Activated T-helper 1 cell treated with anti-CD3 and anti-CD28 coated beads, Interleukin-12 subunit alpha, Interleukin-12 subunit beta, Interleukin-2, Interleukin-4 antibody, amounts not matched to agents 30 ng/mL and 10 ng/mL and 1 ng/mL, durations not matched to agents 14 hours and 24 hours and 36 hours (primary cell): ENCODE measurements at regions of chr2 and their contacts with region 1.

Region 1: DNA sequence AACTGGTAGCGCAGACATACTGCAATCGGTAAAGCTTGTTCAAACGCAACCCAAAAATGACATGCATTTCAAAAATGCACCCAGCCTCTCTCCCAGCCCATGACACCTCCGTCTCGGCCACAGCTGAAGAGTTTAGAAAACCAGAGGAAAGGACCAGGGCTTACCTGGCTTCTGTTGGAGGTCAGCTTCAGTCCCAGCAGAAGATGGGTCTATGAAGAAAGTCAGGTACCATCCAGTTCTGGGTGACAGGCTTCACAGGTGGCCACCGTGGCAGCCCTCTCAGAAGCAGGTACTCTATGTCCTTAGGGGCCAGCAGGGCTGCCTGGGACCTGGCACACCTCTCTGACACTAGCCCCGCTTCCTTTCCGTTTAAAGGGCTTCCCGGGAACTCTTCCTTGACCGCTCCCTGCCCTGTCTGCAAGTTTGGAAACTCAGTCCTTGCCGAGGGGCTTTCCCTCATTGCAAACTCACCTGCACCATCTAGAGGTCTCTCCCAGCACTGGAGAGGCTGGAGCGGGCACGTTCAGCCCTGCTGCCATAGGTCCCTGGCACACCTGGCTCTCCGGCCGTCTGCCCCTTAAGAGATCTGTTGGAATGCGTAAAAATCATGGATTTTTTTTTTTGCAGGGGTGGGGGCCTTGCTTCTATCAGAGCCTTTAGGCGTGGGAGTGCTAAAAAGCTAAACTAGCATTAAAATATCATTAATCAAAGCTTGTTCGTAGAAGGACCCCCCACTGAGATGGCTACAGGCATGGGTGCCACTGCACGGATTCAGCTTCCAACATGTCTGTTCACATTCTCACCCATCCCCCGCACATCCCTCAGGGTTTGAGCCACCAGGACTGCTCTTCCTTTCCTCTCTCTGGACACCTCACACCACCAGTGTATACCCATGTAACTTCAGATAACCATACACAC is at the start of gene EDAR:
- DNase-seq: no peak
- H3K4me3 Mint-ChIP-seq: peak within 1 kb of the TSS; percentile 72
- H3K27ac Mint-ChIP-seq: no peak within 1 kb of the TSS
- H3K4me1 Mint-ChIP-seq: peaks cover 31% of the 10 kb centered on the region
- H3K27me3 Mint-ChIP-seq: peaks cover 7% of the 10 kb centered on the region
- total RNA-seq, gene EDAR: 1.9 and 2.3 TPM in 2 replicates

Region 2: DNA sequence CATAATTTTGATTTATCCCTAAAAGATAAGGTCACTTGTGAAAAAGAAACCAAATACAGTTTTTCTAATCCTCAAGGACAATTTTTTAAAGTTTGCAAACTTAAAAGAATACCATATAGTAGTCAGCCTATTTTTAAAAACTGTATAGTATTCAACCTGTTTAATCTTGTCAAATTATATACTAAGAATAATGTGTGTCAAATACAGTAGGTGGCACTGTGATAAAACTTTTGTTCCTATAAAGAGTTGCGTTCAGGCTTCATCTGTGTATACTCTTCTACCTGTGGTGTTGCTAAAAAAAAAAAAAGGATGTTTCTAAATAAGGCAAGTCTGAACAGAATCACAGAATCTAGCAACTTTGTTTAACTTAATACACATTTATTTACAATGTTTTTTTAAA is 133.9 kb before region 1 on chr2:
- intact Hi-C with region 1: loop called (anchors 1 kb)
- DNase-seq: no peak
- H3K4me3 Mint-ChIP-seq: no peak overlapping the region
- H3K27ac Mint-ChIP-seq: no peak overlapping the region
- H3K4me1 Mint-ChIP-seq: peaks cover 7% of the 10 kb centered on the region
- H3K27me3 Mint-ChIP-seq: no peaks in the 10 kb centered on the region

Region 3: DNA sequence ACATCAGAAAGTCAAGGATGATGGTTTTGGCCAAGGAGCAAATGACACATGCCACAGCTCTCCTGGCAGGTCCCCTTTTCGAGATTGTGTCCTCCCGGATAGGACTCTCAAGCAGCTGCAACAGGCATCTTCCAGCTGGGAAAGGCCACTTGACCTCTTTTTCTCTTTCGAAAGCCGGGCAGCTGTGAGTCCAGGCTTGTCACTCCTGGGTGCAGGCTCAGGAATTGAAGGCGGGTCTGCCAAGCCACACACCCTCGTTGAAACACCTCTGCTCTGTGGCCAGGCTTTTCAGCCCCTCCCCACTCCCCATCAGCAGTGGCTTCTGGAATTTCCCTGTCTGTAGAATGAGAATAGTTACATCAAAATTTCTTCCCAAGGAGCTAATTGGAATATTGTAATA is 104.4 kb before region 1 on chr2:
- intact Hi-C with region 1: no loop called
- DNase-seq: no peak
- H3K4me3 Mint-ChIP-seq: no peak overlapping the region
- H3K27ac Mint-ChIP-seq: no peak overlapping the region
- H3K4me1 Mint-ChIP-seq: no peaks in the 10 kb centered on the region
- H3K27me3 Mint-ChIP-seq: peaks cover 5% of the 10 kb centered on the region

Region 4: DNA sequence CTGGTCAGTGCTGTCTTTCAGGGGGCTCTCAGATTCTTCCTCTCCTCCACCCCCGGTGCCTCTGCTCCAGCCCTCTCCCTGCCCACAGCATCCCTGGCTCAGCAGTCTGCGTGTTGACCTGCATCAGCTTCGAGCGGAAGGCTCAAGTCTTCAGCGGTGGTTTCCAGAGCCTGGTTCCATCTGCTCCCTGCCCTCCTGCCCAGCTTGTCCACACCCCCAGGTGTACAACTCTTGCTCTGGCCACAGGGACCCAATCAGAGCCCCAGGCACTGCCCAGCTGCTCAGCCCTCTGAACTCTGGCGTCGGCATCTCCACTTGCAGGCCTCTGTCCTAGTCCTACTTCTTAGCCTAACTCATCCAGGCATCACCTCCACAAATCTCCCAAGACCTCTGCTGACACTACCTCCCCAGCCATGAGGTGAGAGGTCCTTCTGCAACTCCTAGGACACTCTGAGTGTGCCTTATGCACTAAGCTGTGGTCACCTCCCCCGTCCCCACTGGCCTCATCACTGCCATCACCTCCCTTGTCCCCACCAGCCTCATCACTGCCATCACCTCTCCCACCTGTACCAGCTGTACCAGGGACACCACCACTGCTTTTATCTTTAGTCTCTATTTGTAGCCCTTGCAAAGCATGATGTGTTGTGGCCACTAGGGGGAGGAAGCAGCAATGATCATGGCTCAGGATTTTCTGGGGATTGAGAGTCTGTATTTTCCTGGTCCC is 61.0 kb before region 1 on chr2:
- intact Hi-C with region 1: loop called (anchors 1 kb)
- DNase-seq: no peak
- H3K4me3 Mint-ChIP-seq: no peak overlapping the region
- H3K27ac Mint-ChIP-seq: no peak overlapping the region
- H3K4me1 Mint-ChIP-seq: no peaks in the 10 kb centered on the region
- H3K27me3 Mint-ChIP-seq: no peaks in the 10 kb centered on the region

Region 5: DNA sequence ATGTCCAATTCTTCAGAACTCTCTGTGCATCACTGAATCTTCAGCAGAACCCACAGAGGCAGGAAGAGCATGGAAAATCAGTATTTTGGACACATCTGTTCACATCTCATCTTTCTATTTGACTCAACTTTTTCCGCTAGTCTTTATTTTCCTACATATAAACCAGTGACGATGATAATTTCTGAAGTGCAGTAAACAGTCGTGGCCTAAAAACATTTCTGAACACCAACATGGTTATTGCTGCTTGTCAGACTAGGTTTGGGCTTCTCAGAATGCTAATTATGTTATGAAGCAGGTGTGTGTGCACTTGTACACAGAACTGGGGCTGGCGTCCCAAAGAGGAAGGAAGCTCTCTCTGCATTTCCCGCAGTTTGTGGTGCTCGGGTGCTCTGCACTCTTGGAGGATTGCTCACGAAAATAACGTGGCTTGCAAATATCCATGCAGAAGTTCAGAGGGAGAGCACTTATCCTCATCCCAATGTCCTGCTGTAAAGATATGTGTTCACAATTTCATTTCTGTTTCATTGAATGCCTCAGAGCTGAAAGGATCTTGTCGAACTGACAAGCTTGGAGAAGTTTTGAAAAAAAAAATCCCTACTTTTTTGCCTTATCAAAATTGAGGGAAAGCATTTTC is 50.9 kb before region 1 on chr2:
- intact Hi-C with region 1: loop called (anchors 2 kb)
- DNase-seq: no peak
- H3K4me3 Mint-ChIP-seq: no peak overlapping the region
- H3K27ac Mint-ChIP-seq: peak overlapping the region; percentile 74
- H3K4me1 Mint-ChIP-seq: peaks cover 23% of the 10 kb centered on the region
- H3K27me3 Mint-ChIP-seq: peaks cover 2% of the 10 kb centered on the region

Region 6: GRCh38 chr2:109005686-109006204 is 16.7 kb after region 1 on chr2:
- intact Hi-C with region 1: no loop called
- DNase-seq: no peak
- H3K4me3 Mint-ChIP-seq: no peak overlapping the region
- H3K27ac Mint-ChIP-seq: no peak overlapping the region
- H3K4me1 Mint-ChIP-seq: no peaks in the 10 kb centered on the region
- H3K27me3 Mint-ChIP-seq: peaks cover 2% of the 10 kb centered on the region

Region 7: DNA sequence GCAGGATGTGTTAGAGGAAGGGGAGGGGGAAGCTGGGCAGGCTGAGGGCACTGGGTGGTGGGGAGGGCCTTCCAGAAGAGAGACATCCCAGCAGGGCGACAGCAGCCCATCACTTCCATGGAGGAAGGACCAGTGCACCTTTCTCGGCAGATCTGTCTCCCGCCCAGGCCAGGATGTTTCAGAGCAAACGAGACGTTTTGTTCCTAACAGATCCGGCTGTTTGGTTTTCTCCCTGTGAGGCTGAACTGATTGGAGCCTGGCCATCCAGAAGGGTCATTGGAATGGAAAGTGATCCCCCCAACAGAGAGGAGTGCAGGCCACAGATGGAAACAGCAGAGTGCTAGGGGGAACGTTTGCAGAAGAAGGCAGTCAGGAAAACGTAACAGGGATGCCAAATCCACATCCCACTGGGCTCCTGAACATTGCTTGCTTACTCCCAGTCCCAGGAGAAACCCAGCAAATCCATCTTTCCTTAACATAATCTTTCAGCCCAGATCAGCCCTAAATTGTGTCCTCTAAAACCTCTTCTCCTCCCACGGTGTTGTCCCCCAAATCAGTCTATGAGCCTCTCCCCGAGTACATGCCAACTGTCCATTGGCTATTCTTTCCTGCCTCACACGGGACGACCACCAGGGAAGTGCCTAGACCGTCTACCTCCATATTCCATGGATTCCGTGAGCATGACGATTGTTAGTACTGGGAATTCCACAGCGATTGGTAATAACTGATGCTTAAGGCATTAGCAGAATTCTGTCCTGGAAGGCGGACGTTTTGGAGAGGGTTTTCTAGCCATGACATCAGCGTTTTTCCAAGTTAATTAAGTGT is 497.9 kb after region 1 on chr2:
- intact Hi-C with region 1: no loop called
- DNase-seq: no peak
- H3K4me3 Mint-ChIP-seq: no peak overlapping the region
- H3K27ac Mint-ChIP-seq: no peak overlapping the region
- H3K4me1 Mint-ChIP-seq: no peaks in the 10 kb centered on the region
- H3K27me3 Mint-ChIP-seq: peaks cover 8% of the 10 kb centered on the region